ENCODE measurements at regions of chr7 and their contacts with region 1.

Region 1: DNA sequence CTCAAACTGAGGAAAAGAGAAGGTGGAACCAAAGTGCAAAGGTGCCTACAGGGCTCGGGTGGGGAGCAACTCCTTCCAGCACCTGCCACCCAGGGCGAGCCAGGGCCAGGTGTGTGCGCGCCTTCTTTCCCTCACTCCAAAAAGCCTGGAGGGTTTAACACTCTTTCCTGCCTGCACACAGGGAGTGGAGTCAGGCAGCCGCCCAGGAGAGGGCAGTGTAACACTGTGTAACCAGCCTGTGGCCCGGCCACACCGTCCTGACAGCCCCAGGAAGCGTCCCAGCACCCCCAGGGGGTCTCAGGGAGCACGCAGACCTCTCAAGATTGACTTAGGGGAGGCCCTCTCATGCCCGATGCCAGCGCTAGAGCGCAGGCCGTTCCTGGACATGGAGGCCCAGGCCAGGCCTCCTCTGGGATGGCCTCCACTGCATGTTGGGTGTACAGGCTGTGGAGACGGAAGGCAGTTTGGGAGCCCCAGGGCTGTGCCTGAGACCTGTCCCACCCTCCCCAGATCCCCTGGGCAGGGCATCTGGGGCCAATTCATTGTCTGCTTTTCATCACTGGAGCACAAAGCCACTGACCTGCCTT is 13.4 kb downstream of the BRI3 start:
- DNase-seq: no peak
- H3K4me3 ChIP-seq: no peak overlapping the region
- CTCF ChIP-seq: peak; percentile 80

Region 2: DNA sequence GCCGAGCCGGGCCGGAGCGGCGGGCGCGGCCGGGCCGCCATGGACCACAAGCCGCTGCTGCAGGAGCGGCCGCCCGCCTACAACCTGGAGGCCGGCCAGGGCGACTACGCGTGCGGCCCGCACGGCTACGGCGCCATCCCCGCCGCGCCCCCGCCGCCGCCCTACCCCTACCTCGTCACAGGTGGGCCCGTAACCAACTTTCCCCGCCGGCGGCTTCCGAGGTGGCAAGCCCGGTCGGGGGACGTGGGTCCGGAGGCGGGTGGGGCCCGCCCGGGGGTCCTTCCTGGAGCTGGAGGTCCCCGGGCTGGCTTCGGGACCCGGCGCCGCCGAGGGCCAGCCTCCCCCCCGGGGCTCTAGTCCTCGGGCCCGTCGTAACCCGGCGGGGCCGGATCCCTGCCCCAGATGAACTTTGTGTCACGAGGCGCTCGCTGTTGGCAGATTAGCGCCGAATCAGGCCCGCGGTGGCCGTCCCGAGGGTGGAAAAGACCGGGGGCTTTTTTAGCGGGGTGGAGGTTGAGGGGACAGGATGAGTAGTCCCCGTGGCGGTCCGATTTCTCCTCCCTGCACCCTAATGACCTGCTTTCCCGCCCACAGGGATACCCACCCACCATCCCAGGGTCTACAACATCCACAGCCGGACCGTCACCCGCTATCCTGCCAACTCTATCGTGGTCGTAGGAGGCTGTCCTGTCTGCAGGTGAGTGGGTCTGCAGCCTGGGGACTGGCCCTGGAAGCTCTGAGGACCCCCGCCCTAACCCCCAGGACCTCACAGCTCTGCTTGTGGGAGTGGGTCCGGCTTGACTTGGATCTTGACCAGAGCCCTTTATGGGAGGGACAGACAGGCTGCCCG is 12.9 kb before region 1 on chr7:
- CTCF ChIA-PET with region 1: interaction called, 12 read pairs
- POLR2A ChIA-PET with region 1: interaction called, 3 read pairs
- DNase-seq: no peak
- H3K4me3 ChIP-seq: peak overlapping the region; percentile 83
- CTCF ChIP-seq: no peak

Region 3: GRCh38 chr7:98357751-98358161 is 62.9 kb after region 1 on chr7:
- CTCF ChIA-PET with region 1: no interaction called
- POLR2A ChIA-PET with region 1: no interaction called
- DNase-seq: no peak
- H3K4me3 ChIP-seq: no peak overlapping the region
- CTCF ChIP-seq: no peak

Measured in AG04449 (cell line).